Activated naive CD4-positive, alpha-beta T cell treated with anti-CD3 and anti-CD28 coated beads for 36 hours (primary cell): ENCODE measurements at regions of chr9 and their contacts with region 1.

Region 1: DNA sequence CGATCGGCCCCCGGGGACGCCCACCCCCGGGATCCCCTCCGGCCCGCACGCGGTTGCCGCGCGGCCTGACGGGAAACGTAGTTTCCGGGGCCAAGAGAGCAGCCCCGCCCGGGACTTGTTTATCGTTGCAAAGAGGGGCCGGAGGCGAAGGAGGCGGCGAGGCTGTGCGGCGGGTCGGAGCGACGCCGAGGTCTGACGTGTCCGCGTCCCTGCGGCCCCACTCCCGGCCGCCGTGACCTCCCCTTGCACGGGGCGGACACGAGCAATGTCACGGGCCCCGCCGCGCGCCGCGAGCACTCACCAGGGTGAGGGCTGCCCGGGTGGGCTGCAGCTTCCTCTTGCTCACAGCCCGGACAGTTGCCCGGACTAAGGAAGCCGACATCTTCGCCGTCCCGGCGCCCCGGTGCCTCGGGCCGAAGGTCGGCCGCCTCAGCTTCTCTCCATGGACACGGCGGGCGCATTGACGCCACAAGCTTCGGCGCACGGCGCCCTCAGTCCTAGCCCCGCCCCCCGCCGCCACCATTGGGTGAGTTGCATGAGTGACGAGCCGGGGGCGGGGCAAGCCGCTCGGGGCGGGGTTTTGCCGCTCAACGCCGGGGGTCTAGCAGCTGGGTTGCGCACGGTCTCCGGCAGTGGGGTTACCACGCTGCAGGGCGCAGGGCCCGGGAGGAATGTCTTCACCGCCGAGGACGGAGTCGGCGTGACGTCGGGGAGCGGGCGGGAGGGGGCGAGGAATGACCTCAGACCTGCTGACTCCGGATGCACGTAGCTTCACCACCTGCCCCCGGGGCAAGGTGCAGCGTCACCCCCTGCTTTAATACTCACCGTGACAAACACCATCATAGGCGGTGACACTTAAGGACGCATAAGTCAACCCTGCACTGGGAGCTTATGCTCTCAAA is at the start of gene ISCA1:
- DNase-seq: peak; percentile 96
- H3K4me3 Mint-ChIP-seq: peak within 1 kb of the TSS; percentile 89
- H3K27ac Mint-ChIP-seq: peak within 1 kb of the TSS; percentile 94
- H3K4me1 Mint-ChIP-seq: peaks cover 40% of the 10 kb centered on the region
- H3K27me3 Mint-ChIP-seq: no peaks in the 10 kb centered on the region
- total RNA-seq, gene ISCA1: 18.4 to 18.7 TPM

Region 2: GRCh38 chr9:85741875-85742629 is 540.3 kb before region 1 on chr9 and contains the start of gene AGTPBP1:
- CTCF ChIA-PET with region 1: no interaction called
- intact Hi-C with region 1: loop called (anchors 1 kb)
- DNase-seq: peak; percentile 95
- H3K4me3 Mint-ChIP-seq: peak within 1 kb of the TSS; percentile 83
- H3K27ac Mint-ChIP-seq: peak within 1 kb of the TSS; percentile 94
- H3K4me1 Mint-ChIP-seq: peaks cover 30% of the 10 kb centered on the region
- H3K27me3 Mint-ChIP-seq: peaks cover 6% of the 10 kb centered on the region
- total RNA-seq, gene AGTPBP1: 37.6 to 39.0 TPM

Region 3: GRCh38 chr9:85898332-85898731 is 384.0 kb before region 1 on chr9:
- CTCF ChIA-PET with region 1: no interaction called
- intact Hi-C with region 1: no loop called
- DNase-seq: peak; percentile 6
- H3K4me3 Mint-ChIP-seq: no peak overlapping the region
- H3K27ac Mint-ChIP-seq: no peak overlapping the region
- H3K4me1 Mint-ChIP-seq: no peaks in the 10 kb centered on the region
- H3K27me3 Mint-ChIP-seq: no peaks in the 10 kb centered on the region

Region 4: GRCh38 chr9:85940832-85941621 is 341.3 kb before region 1 on chr9 and contains the start of gene NAA35:
- CTCF ChIA-PET with region 1: no interaction called
- intact Hi-C with region 1: loop called (anchors 1 kb)
- DNase-seq: peak; percentile 99
- H3K4me3 Mint-ChIP-seq: peak within 1 kb of the TSS; percentile 82
- H3K27ac Mint-ChIP-seq: peak within 1 kb of the TSS; percentile 89
- H3K4me1 Mint-ChIP-seq: peaks cover 17% of the 10 kb centered on the region
- H3K27me3 Mint-ChIP-seq: no peaks in the 10 kb centered on the region
- total RNA-seq, gene NAA35: 14.2 to 14.6 TPM

Region 5: GRCh38 chr9:85987236-85987635 is 295.1 kb before region 1 on chr9:
- CTCF ChIA-PET with region 1: no interaction called
- intact Hi-C with region 1: no loop called
- DNase-seq: no peak
- H3K4me3 Mint-ChIP-seq: no peak overlapping the region
- H3K27ac Mint-ChIP-seq: no peak overlapping the region
- H3K4me1 Mint-ChIP-seq: peaks cover 2% of the 10 kb centered on the region
- H3K27me3 Mint-ChIP-seq: no peaks in the 10 kb centered on the region

Region 6: DNA sequence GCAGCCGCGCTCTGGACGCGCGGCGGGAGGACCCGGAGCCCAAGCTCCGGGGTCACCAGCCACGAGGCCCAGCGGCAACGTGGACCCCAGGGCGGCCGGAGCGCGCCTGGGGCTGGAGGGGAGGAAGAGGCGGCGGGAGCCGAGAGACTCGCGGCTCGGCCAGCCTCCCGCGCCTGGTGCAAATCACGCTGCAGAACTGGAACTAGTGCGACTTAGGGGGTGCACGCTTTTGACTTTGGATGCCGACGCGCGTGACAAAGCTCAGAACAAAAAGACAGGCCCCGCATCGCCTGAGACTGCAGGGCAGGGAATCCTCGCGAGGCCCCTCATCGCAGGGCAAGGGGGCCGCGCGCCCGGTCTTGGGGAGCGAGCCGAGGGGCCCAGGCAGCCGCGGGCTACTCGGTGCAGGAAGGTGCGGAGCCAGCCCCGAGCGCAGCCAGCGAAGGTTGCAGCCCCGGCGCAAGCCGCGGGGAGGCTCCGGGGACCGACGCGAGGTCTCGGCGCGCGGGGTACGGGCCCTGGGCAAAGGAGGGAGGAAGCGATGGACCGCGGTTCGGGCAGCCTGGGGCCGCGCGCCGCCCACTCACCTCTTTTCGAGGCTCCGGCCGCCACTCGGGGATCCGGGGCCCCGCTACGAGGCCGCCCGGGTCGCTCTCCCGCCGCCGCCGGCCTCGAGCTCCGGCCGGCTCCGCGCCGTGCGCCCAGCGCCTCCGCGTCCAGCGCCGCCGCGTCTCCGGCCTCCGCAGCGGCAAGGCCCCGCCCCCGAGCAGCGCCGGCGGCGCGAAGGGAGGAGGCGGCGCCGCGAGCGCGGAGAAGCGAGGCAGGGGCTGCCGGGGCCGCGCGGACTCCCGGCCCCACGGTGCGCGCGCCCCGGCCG is 183.3 kb before region 1 on chr9 and contains the start of gene GOLM1:
- CTCF ChIA-PET with region 1: no interaction called
- intact Hi-C with region 1: loop called (anchors 5 kb)
- DNase-seq: peak; percentile 40
- H3K4me3 Mint-ChIP-seq: peak within 1 kb of the TSS; percentile 77
- H3K27ac Mint-ChIP-seq: no peak within 1 kb of the TSS
- H3K4me1 Mint-ChIP-seq: peaks cover 4% of the 10 kb centered on the region
- H3K27me3 Mint-ChIP-seq: peaks cover 30% of the 10 kb centered on the region
- total RNA-seq, gene GOLM1: 0.89 to 0.93 TPM

Region 7: DNA sequence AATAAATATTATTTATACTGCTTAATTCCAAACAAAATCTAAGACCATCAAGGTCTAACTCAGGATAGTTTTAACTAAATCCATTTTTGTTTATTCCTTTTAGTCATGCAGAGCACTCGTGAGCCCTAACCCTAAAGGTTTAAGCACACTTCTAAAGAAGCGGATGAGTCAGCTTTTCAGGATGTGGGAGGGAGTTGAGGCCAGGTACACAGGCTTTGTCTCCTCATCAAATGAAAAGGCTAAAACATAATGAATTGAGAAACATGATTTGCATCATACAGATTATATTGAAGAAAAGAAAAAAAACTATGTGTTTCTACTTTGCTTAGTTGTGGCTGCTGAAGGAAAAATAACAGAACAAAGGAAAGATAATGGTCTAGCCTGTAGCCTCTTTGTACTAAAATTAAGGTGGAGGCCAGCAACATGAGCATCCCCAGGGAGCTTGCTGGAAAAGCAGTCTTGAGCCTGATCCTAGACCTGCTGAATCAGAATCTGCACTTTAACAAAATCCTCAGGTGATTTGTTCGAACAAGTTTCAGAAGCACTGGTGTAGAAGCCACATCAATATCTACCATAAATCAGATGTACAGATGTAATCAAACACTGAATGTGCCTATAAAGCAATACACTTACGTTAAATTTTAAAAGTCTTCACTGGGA is 21.1 kb after region 1 on chr9:
- CTCF ChIA-PET with region 1: no interaction called
- intact Hi-C with region 1: loop called (anchors 1 kb)
- DNase-seq: peak; percentile 61
- H3K4me3 Mint-ChIP-seq: no peak overlapping the region
- H3K27ac Mint-ChIP-seq: peak overlapping the region; percentile 81
- H3K4me1 Mint-ChIP-seq: peaks cover 16% of the 10 kb centered on the region
- H3K27me3 Mint-ChIP-seq: no peaks in the 10 kb centered on the region

Region 8: GRCh38 chr9:86405926-86406325 is 123.6 kb after region 1 on chr9:
- CTCF ChIA-PET with region 1: no interaction called
- intact Hi-C with region 1: loop called (anchors 2 kb)
- DNase-seq: peak; percentile 52
- H3K4me3 Mint-ChIP-seq: peak overlapping the region; percentile 10
- H3K27ac Mint-ChIP-seq: peak overlapping the region; percentile 55
- H3K4me1 Mint-ChIP-seq: peaks cover 27% of the 10 kb centered on the region
- H3K27me3 Mint-ChIP-seq: peaks cover 19% of the 10 kb centered on the region

Region 9: GRCh38 chr9:87973730-87974292 is 1691.5 kb after region 1 on chr9:
- CTCF ChIA-PET with region 1: no interaction called
- intact Hi-C with region 1: loop called (anchors 10 kb)
- DNase-seq: no peak
- H3K4me3 Mint-ChIP-seq: peak overlapping the region; percentile 93
- H3K27ac Mint-ChIP-seq: no peak overlapping the region
- H3K4me1 Mint-ChIP-seq: peaks cover 19% of the 10 kb centered on the region
- H3K27me3 Mint-ChIP-seq: no peaks in the 10 kb centered on the region